CD8-positive, alpha-beta T cell (primary cell): ENCODE measurements at regions of chr6 and their contacts with region 1.

Region 1: DNA sequence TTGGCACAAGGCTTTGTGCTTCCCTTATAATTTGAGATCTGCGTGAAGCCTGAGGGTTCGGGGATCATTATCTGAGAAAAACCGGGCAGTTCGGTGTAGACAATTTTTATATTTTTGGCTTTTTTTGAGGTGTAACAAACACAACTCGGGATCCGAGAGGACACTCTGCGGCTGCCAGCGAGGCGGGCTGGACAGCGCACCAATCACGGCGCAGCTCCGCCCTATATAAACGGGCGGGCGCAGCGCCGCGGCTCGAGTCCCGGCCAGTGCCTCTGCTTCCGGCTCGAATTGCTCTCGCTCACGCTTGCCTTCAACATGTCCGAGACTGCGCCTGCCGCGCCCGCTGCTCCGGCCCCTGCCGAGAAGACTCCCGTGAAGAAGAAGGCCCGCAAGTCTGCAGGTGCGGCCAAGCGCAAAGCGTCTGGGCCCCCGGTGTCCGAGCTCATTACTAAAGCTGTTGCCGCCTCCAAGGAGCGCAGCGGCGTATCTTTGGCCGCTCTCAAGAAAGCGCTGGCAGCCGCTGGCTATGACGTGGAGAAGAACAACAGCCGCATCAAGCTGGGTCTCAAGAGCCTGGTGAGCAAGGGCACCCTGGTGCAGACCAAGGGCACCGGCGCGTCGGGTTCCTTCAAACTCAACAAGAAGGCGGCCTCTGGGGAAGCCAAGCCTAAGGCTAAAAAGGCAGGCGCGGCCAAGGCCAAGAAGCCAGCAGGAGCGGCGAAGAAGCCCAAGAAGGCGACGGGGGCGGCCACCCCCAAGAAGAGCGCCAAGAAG is 69.0 kb downstream of the HFE start:
- DNase-seq: peak; percentile 77 to 96 (median 84)
- ATAC-seq: peak; percentile 39
- H3K4me3 ChIP-seq: peak overlapping the region; percentile 51 to 86
- H3K4me3 Mint-ChIP-seq: peak overlapping the region; percentile 94
- H3K27ac ChIP-seq: peak overlapping the region; percentile 85 to 98
- H3K27ac Mint-ChIP-seq: peak overlapping the region; percentile 98
- H3K4me1 ChIP-seq: peaks cover 20% of the 10 kb centered on the region
- H3K4me1 Mint-ChIP-seq: peaks cover 34% of the 10 kb centered on the region
- H3K27me3 ChIP-seq: no peaks in the 10 kb centered on the region
- H3K27me3 Mint-ChIP-seq: no peaks in the 10 kb centered on the region
- CTCF ChIP-seq: no peak

Region 2: DNA sequence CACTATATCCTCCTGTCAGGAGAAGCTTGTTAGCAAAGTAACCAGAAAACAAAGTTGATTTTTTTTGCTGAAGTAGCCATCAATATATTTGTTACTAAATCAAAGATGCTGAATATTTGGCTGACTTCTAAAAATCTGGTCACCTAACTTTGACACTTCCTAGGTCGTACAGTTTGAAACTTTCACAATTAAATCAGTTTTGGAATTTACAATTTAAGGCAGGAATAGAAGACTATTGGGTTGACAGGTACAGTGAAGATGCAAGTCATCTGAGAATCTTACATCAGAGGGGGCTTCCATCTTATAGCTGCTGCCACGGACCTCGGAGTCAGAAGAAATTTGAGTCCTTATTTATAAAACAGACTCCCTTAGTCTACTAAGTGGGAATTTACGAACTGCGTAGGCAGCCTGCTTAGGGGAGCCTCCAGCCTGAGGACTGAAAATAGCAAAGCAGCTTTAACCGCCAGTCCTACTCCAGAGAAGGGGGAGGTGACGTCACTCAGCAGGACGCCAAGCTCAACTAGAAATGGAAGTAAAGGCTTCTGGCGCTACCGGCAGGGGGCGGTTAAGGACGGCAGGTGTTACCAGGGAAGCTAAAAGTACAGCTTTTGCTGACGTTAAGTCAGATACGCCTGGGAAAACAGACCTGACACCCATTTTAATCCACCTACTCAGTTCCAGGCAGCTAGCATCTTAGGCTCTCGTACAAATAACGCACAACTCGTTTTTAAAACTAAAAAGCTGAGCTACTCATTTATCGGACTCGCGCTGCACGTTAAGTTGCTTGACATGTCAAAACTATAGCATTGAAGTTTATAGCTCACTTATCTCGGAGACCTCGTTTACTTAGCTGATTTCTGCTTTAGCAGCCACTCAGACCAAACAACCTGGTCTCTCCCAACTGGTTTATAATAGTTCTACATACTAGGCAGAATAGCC is 130.1 kb before region 1 on chr6:
- CTCF ChIA-PET with region 1: interaction called, 5 read pairs
- POLR2A ChIA-PET with region 1: interaction called, 186 read pairs
- intact Hi-C with region 1: loop called in 1 of 2 experiments (anchors 5 kb)
- DNase-seq: peak; percentile 74 to 99 (median 89)
- ATAC-seq: peak; percentile 43
- H3K4me3 ChIP-seq: peak overlapping the region; percentile 50 to 76
- H3K4me3 Mint-ChIP-seq: peak overlapping the region; percentile 86
- H3K27ac ChIP-seq: peak overlapping the region; percentile 93 to 96
- H3K27ac Mint-ChIP-seq: peak overlapping the region; percentile 98
- H3K4me1 ChIP-seq: peaks cover 25% of the 10 kb centered on the region
- H3K4me1 Mint-ChIP-seq: peaks cover 48% of the 10 kb centered on the region
- H3K27me3 ChIP-seq: no peaks in the 10 kb centered on the region
- H3K27me3 Mint-ChIP-seq: no peaks in the 10 kb centered on the region
- CTCF ChIP-seq: peak; percentile 80

Region 3: GRCh38 chr6:26103770-26104456 is 52.4 kb before region 1 on chr6:
- CTCF ChIA-PET with region 1: no interaction called
- POLR2A ChIA-PET with region 1: interaction called, 150 read pairs
- intact Hi-C with region 1: loop called (anchors 1 kb)
- DNase-seq: peak; percentile 84 to 97 (median 89)
- ATAC-seq: peak; percentile 91
- H3K4me3 ChIP-seq: peak overlapping the region; percentile 52 to 58
- H3K4me3 Mint-ChIP-seq: peak overlapping the region; percentile 85
- H3K27ac ChIP-seq: peak overlapping the region; percentile 85 to 92
- H3K27ac Mint-ChIP-seq: peak overlapping the region; percentile 98
- H3K4me1 ChIP-seq: peaks cover 7% of the 10 kb centered on the region
- H3K4me1 Mint-ChIP-seq: peaks cover 17% of the 10 kb centered on the region
- H3K27me3 ChIP-seq: no peaks in the 10 kb centered on the region
- H3K27me3 Mint-ChIP-seq: no peaks in the 10 kb centered on the region
- CTCF ChIP-seq: peak; percentile 67

Region 4: DNA sequence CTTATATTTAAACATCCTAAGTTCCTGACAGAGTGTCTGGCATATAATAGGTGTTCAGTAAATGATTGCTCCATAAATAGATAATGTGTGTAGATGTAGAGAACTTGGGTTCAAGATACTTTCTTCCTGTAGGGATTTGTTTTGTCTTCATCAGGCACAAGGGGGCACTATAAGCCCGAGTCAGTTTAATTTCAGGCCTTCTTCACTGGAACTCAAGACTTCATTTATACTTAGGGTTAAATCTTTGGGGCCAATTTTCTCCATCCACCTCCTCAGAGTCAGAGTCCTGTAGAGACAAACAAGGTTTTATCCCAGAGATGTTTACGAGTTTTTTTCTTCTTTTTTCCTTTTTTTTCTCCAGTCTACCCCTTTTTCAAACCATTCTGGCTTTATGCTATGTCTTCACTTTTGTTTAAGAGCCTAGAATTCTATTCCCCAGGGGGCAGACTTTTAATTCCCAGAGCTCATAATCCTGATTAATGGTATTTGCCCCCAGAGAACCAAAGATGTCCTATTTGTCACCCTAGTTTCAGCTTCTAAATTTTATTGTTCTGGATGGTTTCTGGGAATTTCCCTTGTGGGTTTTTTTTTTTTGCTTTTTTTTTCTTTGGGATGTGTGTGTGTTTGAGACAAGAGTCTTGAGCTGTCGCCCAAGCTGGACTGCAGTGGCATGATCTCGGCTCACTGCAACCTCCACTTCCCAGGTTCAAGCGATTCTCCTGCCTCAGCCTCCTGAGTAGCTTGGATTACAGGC is 19.3 kb after region 1 on chr6:
- CTCF ChIA-PET with region 1: interaction called, 15 read pairs
- POLR2A ChIA-PET with region 1: interaction called, 400 read pairs
- intact Hi-C with region 1: loop called (anchors 1 kb)
- DNase-seq: peak in 7 of 9 experiments; percentile 33 to 87 (median 53)
- ATAC-seq: no peak
- H3K4me3 ChIP-seq: no peak overlapping the region
- H3K4me3 Mint-ChIP-seq: peak overlapping the region; percentile 3
- H3K27ac ChIP-seq: no peak overlapping the region
- H3K27ac Mint-ChIP-seq: peak overlapping the region; percentile 63
- H3K4me1 ChIP-seq: peaks cover 26% of the 10 kb centered on the region
- H3K4me1 Mint-ChIP-seq: peaks cover 39% of the 10 kb centered on the region
- H3K27me3 ChIP-seq: no peaks in the 10 kb centered on the region
- H3K27me3 Mint-ChIP-seq: no peaks in the 10 kb centered on the region
- CTCF ChIP-seq: peak; percentile 93

Region 5: DNA sequence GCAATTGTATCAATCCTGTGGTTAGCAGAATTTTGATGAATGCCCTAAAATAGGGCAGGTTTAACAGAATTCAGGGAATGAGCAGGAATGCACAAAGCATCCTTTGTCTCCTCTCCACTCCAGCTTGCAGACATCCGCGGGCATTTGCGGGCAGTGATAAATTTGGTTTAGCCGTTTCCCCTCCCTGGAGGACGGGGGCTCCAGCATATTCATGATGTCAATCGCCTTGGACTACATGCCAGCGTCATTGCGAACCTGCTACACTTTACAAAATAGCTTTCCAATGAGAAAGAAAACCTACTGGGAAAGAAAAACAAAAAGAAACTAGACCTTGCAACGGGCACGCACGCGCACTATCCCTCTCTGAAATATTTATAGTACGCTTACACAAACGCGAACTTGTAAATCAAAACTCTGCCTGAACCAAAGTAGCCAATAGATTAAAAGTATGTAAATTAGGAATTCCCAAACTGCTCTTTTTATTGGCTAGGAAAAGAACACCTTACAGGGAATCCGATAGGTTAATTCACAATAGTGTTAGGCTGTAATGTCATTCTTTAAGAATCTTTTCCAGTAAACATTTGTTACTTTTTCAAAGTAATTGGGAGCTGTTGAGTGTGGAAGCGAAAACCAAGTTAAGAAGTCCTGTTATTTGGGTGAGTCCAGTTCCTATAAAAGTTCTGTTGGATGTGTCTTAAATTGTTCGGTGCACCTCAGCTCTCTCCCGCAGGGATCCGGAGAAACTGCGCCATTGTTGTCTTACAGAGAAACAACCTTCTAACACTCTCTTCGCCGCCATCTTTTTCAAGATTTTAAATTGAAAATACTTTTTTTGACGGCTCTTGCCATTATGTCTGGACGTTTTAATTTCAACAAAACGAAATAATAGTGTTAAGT is 67.6 kb after region 1 on chr6:
- CTCF ChIA-PET with region 1: interaction called, 3 read pairs
- POLR2A ChIA-PET with region 1: interaction called, 48 read pairs
- intact Hi-C with region 1: no loop called
- DNase-seq: peak in 8 of 9 experiments; percentile 42 to 90 (median 72)
- ATAC-seq: peak; percentile 85
- H3K4me3 ChIP-seq: peak overlapping the region; percentile 64 to 72
- H3K4me3 Mint-ChIP-seq: no peak overlapping the region
- H3K27ac ChIP-seq: peak overlapping the region; percentile 76 to 87
- H3K27ac Mint-ChIP-seq: no peak overlapping the region
- H3K4me1 ChIP-seq: peaks cover 20% of the 10 kb centered on the region
- H3K4me1 Mint-ChIP-seq: peaks cover 24% of the 10 kb centered on the region
- H3K27me3 ChIP-seq: no peaks in the 10 kb centered on the region
- H3K27me3 Mint-ChIP-seq: no peaks in the 10 kb centered on the region
- CTCF ChIP-seq: no peak

Region 6: GRCh38 chr6:26339612-26340011 is 183.3 kb after region 1 on chr6:
- CTCF ChIA-PET with region 1: no interaction called
- POLR2A ChIA-PET with region 1: no interaction called
- intact Hi-C with region 1: no loop called
- DNase-seq: no peak
- ATAC-seq: no peak
- H3K4me3 ChIP-seq: no peak overlapping the region
- H3K4me3 Mint-ChIP-seq: no peak overlapping the region
- H3K27ac ChIP-seq: no peak overlapping the region
- H3K27ac Mint-ChIP-seq: no peak overlapping the region
- H3K4me1 ChIP-seq: peaks cover 4% of the 10 kb centered on the region
- H3K4me1 Mint-ChIP-seq: peaks cover 19% of the 10 kb centered on the region
- H3K27me3 ChIP-seq: no peaks in the 10 kb centered on the region
- H3K27me3 Mint-ChIP-seq: peaks cover under 1% of the 10 kb centered on the region
- CTCF ChIP-seq: no peak

Region 7: DNA sequence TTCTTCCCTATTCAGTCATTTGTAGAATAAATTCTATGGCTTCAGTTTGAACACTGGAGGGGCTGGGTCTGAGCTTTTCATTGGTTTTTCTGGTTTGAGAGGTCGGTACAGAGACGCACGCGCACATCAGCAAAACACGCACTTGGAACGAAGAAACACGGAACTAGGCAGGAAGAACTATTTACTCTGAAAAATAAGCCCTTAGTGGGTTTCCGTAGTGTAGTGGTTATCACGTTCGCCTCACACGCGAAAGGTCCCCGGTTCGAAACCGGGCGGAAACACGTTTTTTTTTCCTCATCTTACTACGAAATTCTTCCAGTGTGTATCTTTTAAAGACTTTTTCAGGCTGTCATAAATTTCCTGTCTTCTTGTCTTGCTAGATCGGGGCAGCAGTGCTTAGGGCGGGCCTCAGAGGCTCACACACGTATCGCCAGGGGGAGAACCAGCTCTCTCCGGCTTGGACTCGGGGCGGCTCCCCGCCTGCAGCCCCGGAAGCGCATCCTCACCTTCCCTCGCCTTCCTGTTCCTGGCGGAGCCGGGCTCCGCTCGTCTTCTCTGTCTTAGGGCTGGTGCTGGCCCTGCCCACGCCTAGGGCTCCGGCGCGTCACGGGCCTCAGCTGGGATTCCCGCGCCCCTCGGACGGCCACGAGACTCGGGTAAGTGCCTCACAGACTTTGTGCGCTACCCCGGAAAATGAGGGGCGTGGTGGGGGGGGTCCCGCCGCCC is 381.7 kb after region 1 on chr6 and contains the start of gene HMGN4:
- CTCF ChIA-PET with region 1: no interaction called
- POLR2A ChIA-PET with region 1: interaction called, 11 read pairs
- intact Hi-C with region 1: no loop called
- DNase-seq: peak; percentile 65 to 96 (median 79)
- ATAC-seq: peak; percentile 69
- H3K4me3 ChIP-seq: peak within 1 kb of the TSS; percentile 66 to 99
- H3K4me3 Mint-ChIP-seq: peak within 1 kb of the TSS; percentile 89
- H3K27ac ChIP-seq: peak within 1 kb of the TSS; percentile 88 to 93
- H3K27ac Mint-ChIP-seq: peak within 1 kb of the TSS; percentile 92
- H3K4me1 ChIP-seq: peaks cover 32% of the 10 kb centered on the region
- H3K4me1 Mint-ChIP-seq: peaks cover 58% of the 10 kb centered on the region
- H3K27me3 ChIP-seq: no peaks in the 10 kb centered on the region
- H3K27me3 Mint-ChIP-seq: no peaks in the 10 kb centered on the region
- CTCF ChIP-seq: no peak
- total RNA-seq, gene HMGN4: 24.8 to 33.7 TPM

Region 8: GRCh38 chr6:27825025-27825793 is 1668.9 kb after region 1 on chr6:
- CTCF ChIA-PET with region 1: no interaction called
- POLR2A ChIA-PET with region 1: interaction called, 16 read pairs
- intact Hi-C with region 1: no loop called
- DNase-seq: peak in 1 of 9 experiments; percentile 45
- ATAC-seq: peak; percentile 6
- H3K4me3 ChIP-seq: peak overlapping the region; percentile 55 to 76
- H3K4me3 Mint-ChIP-seq: peak overlapping the region; percentile 89
- H3K27ac ChIP-seq: peak overlapping the region; percentile 81 to 91
- H3K27ac Mint-ChIP-seq: peak overlapping the region; percentile 99
- H3K4me1 ChIP-seq: peaks cover 24% of the 10 kb centered on the region
- H3K4me1 Mint-ChIP-seq: peaks cover 32% of the 10 kb centered on the region
- H3K27me3 ChIP-seq: no peaks in the 10 kb centered on the region
- H3K27me3 Mint-ChIP-seq: no peaks in the 10 kb centered on the region
- CTCF ChIP-seq: no peak